ENCODE measurements at regions of chr3 and their contacts with region 1.

Region 1: DNA sequence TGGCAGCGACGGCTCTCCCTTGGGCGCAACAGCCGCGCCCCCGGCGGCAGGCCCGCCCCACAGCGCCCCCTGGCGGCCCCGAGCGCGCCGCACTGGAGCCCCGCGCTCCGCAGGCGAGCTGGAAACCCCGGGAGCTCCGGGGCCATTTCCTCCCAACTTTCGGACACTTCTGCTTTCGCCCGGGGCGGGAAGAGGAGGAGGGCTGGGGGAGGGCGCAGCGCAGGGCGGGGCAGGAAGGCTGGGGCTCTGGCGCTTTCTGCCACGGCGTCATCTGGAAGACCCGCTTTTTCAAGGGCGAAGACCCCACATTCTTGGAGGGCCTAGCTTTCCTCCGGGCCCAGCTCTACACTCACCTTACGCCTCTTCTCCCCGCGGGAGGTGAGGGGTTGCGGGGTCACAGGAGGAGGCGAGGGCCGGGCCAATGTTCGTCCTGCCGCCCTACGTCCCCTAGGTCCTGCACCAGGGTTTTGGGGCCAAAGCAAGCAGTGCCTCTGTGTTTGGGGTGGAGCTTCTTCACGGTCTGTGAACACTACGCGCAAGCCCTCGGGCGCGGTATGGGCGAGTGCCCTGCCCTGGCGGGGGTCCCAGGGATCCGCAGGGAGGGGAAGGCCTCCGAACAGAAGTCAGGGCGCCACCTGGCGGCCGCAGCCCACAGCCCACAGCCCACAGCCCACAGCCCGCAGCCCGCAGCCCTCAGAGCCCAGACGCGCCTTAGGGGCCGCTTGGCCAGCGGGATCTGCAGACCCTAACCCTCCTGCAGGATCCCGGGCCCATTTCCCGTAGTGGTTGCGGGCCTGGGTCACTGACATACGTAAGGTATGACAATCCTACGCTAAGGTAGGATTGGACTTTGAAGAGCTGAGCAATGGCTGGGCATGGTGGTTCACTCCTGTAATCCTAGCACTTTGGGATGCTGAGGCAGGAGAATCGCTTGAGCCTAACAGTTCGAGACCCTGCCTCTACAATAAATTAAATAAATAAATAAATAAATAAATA is 31.1 kb downstream of the FOXL2 start:
- DNase-seq: peak; percentile 61
- ATAC-seq: peak; percentile 87
- H3K4me3 ChIP-seq: peak overlapping the region; percentile 71 to 73
- H3K27ac ChIP-seq: peak overlapping the region; percentile 85
- H3K4me1 ChIP-seq: peaks cover 13 to 15% of the 10 kb centered on the region in 2 experiments; a peak in 3 of 4 replicates
- H3K27me3 ChIP-seq: no peaks in the 10 kb centered on the region
- CTCF ChIP-seq: peak in 2 of 3 experiments; percentile 79 to 82; a peak in 4 of 6 replicates
- POLR2A ChIP-seq: no peak
- RAD21 ChIP-seq: no peak

Region 2: GRCh38 chr3:138186803-138187295 is 729.0 kb before region 1 on chr3:
- CTCF ChIA-PET with region 1: no interaction called
- POLR2A ChIA-PET with region 1: no interaction called
- RAD21 ChIA-PET with region 1: no interaction called
- intact Hi-C with region 1: loop called (anchors 5 kb)
- DNase-seq: no peak
- ATAC-seq: peak; percentile 84
- H3K4me3 ChIP-seq: peak overlapping the region; percentile 89 to 95
- H3K27ac ChIP-seq: peak overlapping the region; percentile 71
- H3K4me1 ChIP-seq: peaks cover 9 to 29% of the 10 kb centered on the region in 2 experiments; a peak in 3 of 4 replicates
- H3K27me3 ChIP-seq: no peaks in the 10 kb centered on the region
- CTCF ChIP-seq: no peak
- POLR2A ChIP-seq: no peak
- RAD21 ChIP-seq: no peak

Region 3: GRCh38 chr3:138594150-138594934 is 321.5 kb before region 1 on chr3 and contains the start of gene CEP70:
- CTCF ChIA-PET with region 1: interaction called, 76 read pairs
- POLR2A ChIA-PET with region 1: interaction called, 17 read pairs
- RAD21 ChIA-PET with region 1: interaction called, 14 to 21 read pairs
- intact Hi-C with region 1: loop called (anchors 1 kb)
- DNase-seq: peak; percentile 90
- ATAC-seq: peak; percentile 95
- H3K4me3 ChIP-seq: peak within 1 kb of the TSS; percentile 76 to 77
- H3K27ac ChIP-seq: peak within 1 kb of the TSS; percentile 84
- H3K4me1 ChIP-seq: peaks cover 5 to 13% of the 10 kb centered on the region in 2 experiments
- H3K27me3 ChIP-seq: no peaks in the 10 kb centered on the region
- CTCF ChIP-seq: peak; percentile 69 to 91 (median 89)
- POLR2A ChIP-seq: peak; percentile 82
- RAD21 ChIP-seq: peak; percentile 90
- total RNA-seq, gene CEP70: 38.7 TPM

Region 4: DNA sequence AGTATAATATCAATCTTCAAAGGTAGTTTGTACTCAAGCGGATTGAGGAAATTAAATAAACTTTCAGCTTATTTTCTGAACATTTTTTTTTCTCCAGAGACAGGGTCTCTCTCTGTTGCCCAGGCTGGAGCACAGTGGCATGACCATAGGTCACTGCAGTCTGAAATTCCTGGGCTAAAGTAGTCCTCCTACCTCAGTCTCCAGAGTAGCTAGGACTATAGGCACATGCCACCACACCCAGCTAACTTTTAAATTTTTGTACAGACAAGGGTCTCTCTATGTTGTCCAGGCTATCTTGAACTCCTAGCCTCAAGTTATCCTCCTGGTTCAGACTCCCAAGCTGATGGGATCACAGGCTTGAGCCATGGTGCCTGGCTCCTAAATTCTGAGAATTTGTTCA is 210.1 kb before region 1 on chr3:
- CTCF ChIA-PET with region 1: interaction called, 165 read pairs
- POLR2A ChIA-PET with region 1: interaction called, 3 read pairs
- RAD21 ChIA-PET with region 1: interaction called, 3 to 4 read pairs
- intact Hi-C with region 1: no loop called
- DNase-seq: no peak
- ATAC-seq: no peak
- H3K4me3 ChIP-seq: no peak overlapping the region
- H3K27ac ChIP-seq: no peak overlapping the region
- H3K4me1 ChIP-seq: no peaks in the 10 kb centered on the region
- H3K27me3 ChIP-seq: no peaks in the 10 kb centered on the region
- CTCF ChIP-seq: no peak
- POLR2A ChIP-seq: no peak
- RAD21 ChIP-seq: no peak

Region 5: GRCh38 chr3:138862924-138863775 is 52.7 kb before region 1 on chr3:
- CTCF ChIA-PET with region 1: interaction called, 15 read pairs
- POLR2A ChIA-PET with region 1: interaction called, 4 read pairs
- RAD21 ChIA-PET with region 1: interaction called, 5 read pairs
- intact Hi-C with region 1: loop called (anchors 2 kb)
- DNase-seq: peak; percentile 81
- ATAC-seq: peak; percentile 84
- H3K4me3 ChIP-seq: peak overlapping the region; percentile 13 to 53
- H3K27ac ChIP-seq: peak overlapping the region; percentile 75
- H3K4me1 ChIP-seq: peaks cover 28 to 40% of the 10 kb centered on the region in 2 experiments
- H3K27me3 ChIP-seq: no peaks in the 10 kb centered on the region
- CTCF ChIP-seq: no peak
- POLR2A ChIP-seq: peak; percentile 44
- RAD21 ChIP-seq: peak; percentile 20; the same call in 1 of the 2 replicates

Region 6: DNA sequence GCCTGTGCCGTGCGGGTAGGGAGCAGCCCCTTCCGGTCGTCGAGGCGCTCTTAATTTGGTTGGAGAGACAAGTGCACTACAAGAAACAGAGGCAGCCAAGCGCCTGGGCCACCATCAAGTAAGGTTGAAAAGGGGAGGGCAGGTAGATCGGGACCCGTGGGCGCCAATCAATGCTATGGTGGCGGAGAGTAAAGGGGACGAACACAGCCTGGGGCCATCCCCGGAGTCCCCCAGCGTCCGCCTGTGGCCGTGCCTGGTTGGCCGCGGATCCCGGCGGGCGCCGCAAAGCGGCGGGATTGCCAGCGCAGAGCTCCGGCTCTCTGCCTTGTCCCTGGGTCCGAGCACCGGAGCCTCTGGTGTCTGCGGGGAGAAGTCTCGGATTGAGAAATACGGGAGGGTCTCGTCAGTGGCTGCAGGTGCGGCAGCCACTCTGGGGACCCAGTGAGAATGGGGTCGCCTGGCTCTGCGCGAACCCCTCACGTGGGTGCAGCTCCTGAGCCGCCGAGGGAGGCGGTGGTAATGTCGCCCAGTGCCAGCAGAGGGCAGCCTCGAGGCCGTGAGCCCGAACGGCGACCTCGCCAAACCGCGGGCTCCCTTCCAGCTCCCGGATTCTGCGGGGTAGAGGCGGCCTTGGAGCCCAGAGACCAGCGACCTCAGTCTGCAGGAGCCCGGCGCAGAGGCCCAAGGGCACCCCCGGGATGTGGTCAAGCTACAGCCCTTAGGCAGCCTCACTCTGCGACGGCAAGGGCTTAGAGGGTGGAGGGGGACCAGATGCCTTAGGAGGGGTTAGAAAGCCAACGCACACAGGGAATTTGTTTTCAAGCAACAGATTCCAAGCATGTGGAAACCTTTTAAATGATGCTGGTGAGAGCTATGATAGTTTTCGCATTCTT is 20.3 kb after region 1 on chr3:
- CTCF ChIA-PET with region 1: interaction called, 82 read pairs
- POLR2A ChIA-PET with region 1: interaction called, 4 read pairs
- RAD21 ChIA-PET with region 1: interaction called in 1 of 2 experiments, 4 read pairs
- intact Hi-C with region 1: no loop called
- DNase-seq: peak; percentile 52
- ATAC-seq: peak; percentile 88
- H3K4me3 ChIP-seq: peak overlapping the region; percentile 43 to 68
- H3K27ac ChIP-seq: peak overlapping the region; percentile 21
- H3K4me1 ChIP-seq: peaks cover 6 to 18% of the 10 kb centered on the region in 2 experiments; a peak in 3 of 4 replicates
- H3K27me3 ChIP-seq: no peaks in the 10 kb centered on the region
- CTCF ChIP-seq: peak; percentile 70 to 91 (median 76)
- POLR2A ChIP-seq: no peak
- RAD21 ChIP-seq: peak; percentile 61

Region 7: GRCh38 chr3:139157161-139157932 is 241.5 kb after region 1 on chr3:
- CTCF ChIA-PET with region 1: no interaction called
- POLR2A ChIA-PET with region 1: no interaction called
- RAD21 ChIA-PET with region 1: no interaction called
- intact Hi-C with region 1: no loop called
- DNase-seq: no peak
- ATAC-seq: no peak
- H3K4me3 ChIP-seq: no peak overlapping the region
- H3K27ac ChIP-seq: no peak overlapping the region
- H3K4me1 ChIP-seq: no peaks in the 10 kb centered on the region; a peak in 1 of 4 replicates
- H3K27me3 ChIP-seq: no peaks in the 10 kb centered on the region
- CTCF ChIP-seq: no peak
- POLR2A ChIP-seq: no peak
- RAD21 ChIP-seq: no peak

Measured in HCT116 (cell line).